ENCODE measurements at regions of chr11 and their contacts with region 1.

Region 1: DNA sequence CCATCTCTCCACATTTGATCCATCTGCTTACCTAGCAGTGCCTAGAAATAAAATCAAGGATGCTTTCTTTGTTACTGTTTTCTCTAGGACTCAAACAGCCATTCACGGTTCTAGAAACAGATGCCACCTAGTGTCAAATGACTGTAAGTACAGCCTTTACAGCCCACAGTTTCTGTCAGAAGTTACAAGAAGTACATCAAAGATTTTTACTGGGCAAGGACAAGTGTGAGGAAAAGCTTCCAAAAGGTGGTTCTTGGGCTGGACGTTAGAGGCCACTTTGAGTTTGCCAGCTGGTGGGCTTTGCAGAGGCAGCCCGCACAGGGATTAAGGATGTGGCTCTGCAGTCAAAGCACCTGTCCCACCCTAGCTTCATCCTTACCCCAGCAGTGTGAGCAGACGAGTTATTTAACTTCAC is 6.9 kb downstream of the KMT5B start:
- DNase-seq: peak in 10 of 42 donors; percentile 25 to 71 (median 36)

Region 2: GRCh38 chr11:68010090-68011041 is 195.8 kb before region 1 on chr11 and contains the start of gene ALDH3B1:
- intact Hi-C with region 1: loop called (anchors 10 kb)
- DNase-seq: peak; percentile 53 to 90 (median 78)

Region 3: GRCh38 chr11:68127714-68128681 is 78.2 kb before region 1 on chr11:
- intact Hi-C with region 1: no loop called
- DNase-seq: peak in 39 of 42 donors; percentile 34 to 82 (median 59)

Region 4: DNA sequence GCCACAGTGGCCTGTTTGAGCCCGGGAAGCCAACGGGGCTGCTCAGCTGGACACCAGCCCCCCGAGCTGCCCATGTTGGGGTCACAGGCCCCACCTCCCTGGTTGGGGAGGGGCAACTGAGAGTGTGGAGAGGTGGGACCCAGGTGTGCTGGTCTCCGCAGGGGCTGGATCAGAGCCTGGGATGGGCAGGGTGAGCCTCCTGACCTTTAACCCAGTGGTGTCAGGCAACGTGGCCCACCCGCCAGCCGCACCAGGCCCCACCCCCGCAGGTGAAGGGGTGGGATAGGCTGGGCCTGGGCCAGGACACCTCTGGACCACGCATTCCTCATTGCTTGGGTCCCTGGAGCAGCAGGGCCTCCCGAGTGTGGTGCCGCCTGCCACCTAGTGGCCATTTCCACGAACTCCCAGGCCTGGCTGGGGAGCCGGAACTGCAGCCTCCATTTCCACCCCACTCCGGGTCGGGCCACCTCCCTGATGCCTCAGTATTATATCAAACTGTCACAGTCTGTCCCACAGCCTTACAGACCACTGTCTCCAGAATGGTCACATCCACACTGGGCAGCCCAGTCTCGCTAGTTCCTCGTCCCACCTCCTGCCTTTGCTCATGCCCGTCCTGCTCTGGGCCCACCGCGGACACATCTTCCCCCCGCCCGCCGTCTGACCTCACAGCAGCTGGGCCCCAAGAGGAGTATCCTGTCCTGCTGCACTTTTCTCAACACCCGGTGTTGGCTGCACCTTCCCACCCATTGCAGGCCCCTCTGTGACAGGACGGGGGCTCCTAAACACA is 241.0 kb after region 1 on chr11:
- intact Hi-C with region 1: loop called (anchors 5 kb)
- DNase-seq: peak; percentile 58 to 93 (median 84)